ENCODE measurements at regions of chr6 and their contacts with region 1.

Region 1: DNA sequence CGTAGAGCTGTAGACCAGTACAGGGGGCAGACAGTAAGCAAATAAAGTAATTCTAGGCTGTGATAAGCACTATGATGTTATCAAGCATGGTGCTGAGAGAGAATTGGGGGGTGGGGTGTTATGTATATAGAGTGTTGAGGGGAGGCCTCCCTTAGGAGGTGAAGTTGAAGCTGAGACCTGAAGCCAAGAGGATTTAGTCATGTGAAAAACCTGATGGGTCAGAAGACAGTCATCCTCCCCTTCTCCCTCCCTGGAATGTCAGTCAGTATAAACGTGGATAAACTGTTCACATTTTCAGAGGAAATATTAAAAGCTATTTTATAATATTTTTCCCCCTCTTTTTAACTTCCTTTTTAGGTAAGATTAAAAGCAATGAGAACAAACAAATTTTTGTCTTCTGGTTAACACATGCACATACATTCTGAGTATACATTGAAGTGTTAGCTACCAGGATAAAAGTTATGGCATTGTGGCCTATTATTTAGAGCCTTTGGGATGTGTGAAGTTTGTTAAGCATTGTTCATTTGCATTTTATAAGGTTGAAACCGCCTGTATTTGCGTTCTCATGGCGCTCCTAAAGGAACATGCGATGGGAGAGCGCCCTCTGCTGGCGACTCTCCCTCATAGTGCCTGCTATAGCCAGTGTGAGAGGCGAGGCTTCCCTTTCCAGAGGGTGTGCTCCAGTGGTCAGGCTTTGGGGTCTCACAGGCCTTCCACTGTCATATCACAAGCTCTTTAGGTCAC is 35.4 kb upstream of the MAPK13 start:
- DNase-seq: peak; percentile 87
- ATAC-seq: peak; percentile 96
- H3K4me3 ChIP-seq: no peak overlapping the region
- H3K4me3 Mint-ChIP-seq: no peak overlapping the region
- H3K27ac ChIP-seq: peak overlapping the region in 1 of 2 donors; percentile 35
- H3K27ac Mint-ChIP-seq: peak overlapping the region; percentile 46
- H3K4me1 ChIP-seq: peaks cover 24 to 26% of the 10 kb centered on the region in 2 donors
- H3K4me1 Mint-ChIP-seq: peaks cover 34% of the 10 kb centered on the region
- H3K27me3 ChIP-seq: no peaks in the 10 kb centered on the region
- H3K27me3 Mint-ChIP-seq: no peaks in the 10 kb centered on the region
- CTCF ChIP-seq: peak; percentile 98

Region 2: GRCh38 chr6:35522660-35523658 is 572.0 kb before region 1 on chr6:
- CTCF ChIA-PET with region 1: no interaction called
- POLR2A ChIA-PET with region 1: no interaction called
- intact Hi-C with region 1: loop called (anchors 2 kb)
- DNase-seq: peak; percentile 80
- ATAC-seq: peak; percentile 92
- H3K4me3 ChIP-seq: peak overlapping the region; percentile 14 to 50 (median 41)
- H3K4me3 Mint-ChIP-seq: peak overlapping the region; percentile 77
- H3K27ac ChIP-seq: no peak overlapping the region
- H3K27ac Mint-ChIP-seq: no peak overlapping the region
- H3K4me1 ChIP-seq: peaks cover 3 to 9% of the 10 kb centered on the region in 2 donors
- H3K4me1 Mint-ChIP-seq: peaks cover 9% of the 10 kb centered on the region
- H3K27me3 ChIP-seq: peaks cover 0 to 5% (median 0%) of the 10 kb centered on the region in 4 experiments
- H3K27me3 Mint-ChIP-seq: no peaks in the 10 kb centered on the region
- CTCF ChIP-seq: peak; percentile 98

Region 3: GRCh38 chr6:35737413-35738211 is 357.3 kb before region 1 on chr6:
- CTCF ChIA-PET with region 1: interaction called, 6 read pairs
- POLR2A ChIA-PET with region 1: no interaction called
- intact Hi-C with region 1: loop called (anchors 1 kb)
- DNase-seq: peak; percentile 81
- ATAC-seq: peak; percentile 69
- H3K4me3 ChIP-seq: no peak overlapping the region
- H3K4me3 Mint-ChIP-seq: no peak overlapping the region
- H3K27ac ChIP-seq: no peak overlapping the region
- H3K27ac Mint-ChIP-seq: peak overlapping the region; percentile 60
- H3K4me1 ChIP-seq: peaks cover 8 to 19% of the 10 kb centered on the region in 2 donors
- H3K4me1 Mint-ChIP-seq: peaks cover 22% of the 10 kb centered on the region
- H3K27me3 ChIP-seq: no peaks in the 10 kb centered on the region
- H3K27me3 Mint-ChIP-seq: no peaks in the 10 kb centered on the region
- CTCF ChIP-seq: peak; percentile 81

Region 4: GRCh38 chr6:36027501-36028087 is 67.3 kb before region 1 on chr6 and contains the start of gene MAPK14:
- CTCF ChIA-PET with region 1: interaction called, 150 read pairs
- POLR2A ChIA-PET with region 1: interaction called, 4 read pairs
- intact Hi-C with region 1: loop called (anchors 1 kb)
- DNase-seq: peak; percentile 100
- ATAC-seq: peak; percentile 94
- H3K4me3 ChIP-seq: peak within 1 kb of the TSS; percentile 79 to 91 (median 87)
- H3K4me3 Mint-ChIP-seq: peak within 1 kb of the TSS; percentile 96
- H3K27ac ChIP-seq: peak within 1 kb of the TSS; percentile 61 to 64
- H3K27ac Mint-ChIP-seq: peak within 1 kb of the TSS; percentile 94
- H3K4me1 ChIP-seq: peaks cover 29 to 35% of the 10 kb centered on the region in 2 donors
- H3K4me1 Mint-ChIP-seq: peaks cover 38% of the 10 kb centered on the region
- H3K27me3 ChIP-seq: peaks cover 0 to 19% (median 16%) of the 10 kb centered on the region in 4 experiments
- H3K27me3 Mint-ChIP-seq: peaks cover 20% of the 10 kb centered on the region
- CTCF ChIP-seq: peak; percentile 86
- total RNA-seq, gene MAPK14: 49.9 and 50.4 TPM in 2 replicates

Region 5: GRCh38 chr6:36083446-36083845 is 11.5 kb before region 1 on chr6:
- CTCF ChIA-PET with region 1: interaction called, 46 read pairs
- POLR2A ChIA-PET with region 1: no interaction called
- intact Hi-C with region 1: no loop called
- DNase-seq: no peak
- ATAC-seq: no peak
- H3K4me3 ChIP-seq: no peak overlapping the region
- H3K4me3 Mint-ChIP-seq: no peak overlapping the region
- H3K27ac ChIP-seq: no peak overlapping the region
- H3K27ac Mint-ChIP-seq: no peak overlapping the region
- H3K4me1 ChIP-seq: peaks cover 6 to 7% of the 10 kb centered on the region in 2 donors
- H3K4me1 Mint-ChIP-seq: peaks cover 23% of the 10 kb centered on the region
- H3K27me3 ChIP-seq: no peaks in the 10 kb centered on the region
- H3K27me3 Mint-ChIP-seq: no peaks in the 10 kb centered on the region
- CTCF ChIP-seq: no peak

Region 6: GRCh38 chr6:36123257-36124139 is 28.6 kb after region 1 on chr6:
- CTCF ChIA-PET with region 1: interaction called, 61 read pairs
- POLR2A ChIA-PET with region 1: no interaction called
- intact Hi-C with region 1: no loop called
- DNase-seq: peak; percentile 88
- ATAC-seq: peak; percentile 74
- H3K4me3 ChIP-seq: no peak overlapping the region
- H3K4me3 Mint-ChIP-seq: peak overlapping the region; percentile 12
- H3K27ac ChIP-seq: peak overlapping the region; percentile 62 to 95
- H3K27ac Mint-ChIP-seq: peak overlapping the region; percentile 88
- H3K4me1 ChIP-seq: peaks cover 57 to 70% of the 10 kb centered on the region in 2 donors
- H3K4me1 Mint-ChIP-seq: peaks cover 69% of the 10 kb centered on the region
- H3K27me3 ChIP-seq: no peaks in the 10 kb centered on the region
- H3K27me3 Mint-ChIP-seq: no peaks in the 10 kb centered on the region
- CTCF ChIP-seq: peak; percentile 64

Region 7: DNA sequence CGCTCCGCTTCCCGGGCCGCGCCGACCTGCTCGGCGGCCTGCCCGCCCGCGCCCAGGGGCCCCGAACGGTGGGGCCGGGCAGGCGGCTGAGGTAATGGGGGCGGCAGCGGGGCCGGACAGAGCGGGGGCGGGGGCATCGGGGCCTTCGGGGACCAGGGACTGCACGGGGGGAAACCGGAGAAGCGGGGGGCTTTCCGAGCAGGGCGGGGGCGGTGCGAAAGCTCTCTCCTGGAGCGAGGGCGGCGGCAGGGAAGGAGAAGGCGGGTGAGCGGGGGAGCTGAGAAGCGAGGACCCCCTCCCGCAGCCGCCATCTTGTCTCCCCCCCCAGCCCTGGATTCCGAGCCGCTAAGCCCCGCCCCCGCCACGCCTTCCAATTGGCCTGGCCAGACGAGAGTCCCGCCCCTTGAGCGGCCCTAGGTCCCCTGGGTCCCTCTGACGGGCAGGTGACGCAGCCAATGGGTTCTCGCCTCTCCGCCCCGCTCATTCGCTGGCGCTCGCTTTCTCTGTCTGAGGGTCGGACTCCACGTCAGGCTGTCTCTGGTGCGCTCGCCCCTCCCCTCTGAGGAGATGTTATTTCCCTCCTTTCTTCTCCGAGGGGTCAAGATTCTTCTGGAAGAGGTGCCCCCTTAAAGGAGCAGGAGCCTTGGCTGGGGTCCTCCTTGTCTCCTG is 102.1 kb after region 1 on chr6:
- CTCF ChIA-PET with region 1: interaction called, 20 read pairs
- POLR2A ChIA-PET with region 1: no interaction called
- intact Hi-C with region 1: loop called (anchors 1 kb)
- DNase-seq: peak; percentile 98
- ATAC-seq: peak; percentile 90
- H3K4me3 ChIP-seq: peak overlapping the region; percentile 17 to 84 (median 62)
- H3K4me3 Mint-ChIP-seq: peak overlapping the region; percentile 94
- H3K27ac ChIP-seq: peak overlapping the region; percentile 78 to 79
- H3K27ac Mint-ChIP-seq: peak overlapping the region; percentile 96
- H3K4me1 ChIP-seq: peaks cover 21 to 22% of the 10 kb centered on the region in 2 donors
- H3K4me1 Mint-ChIP-seq: peaks cover 36% of the 10 kb centered on the region
- H3K27me3 ChIP-seq: no peaks in the 10 kb centered on the region
- H3K27me3 Mint-ChIP-seq: no peaks in the 10 kb centered on the region
- CTCF ChIP-seq: no peak